ENCODE measurements at regions of chr11 and their contacts with region 1.

Region 1: DNA sequence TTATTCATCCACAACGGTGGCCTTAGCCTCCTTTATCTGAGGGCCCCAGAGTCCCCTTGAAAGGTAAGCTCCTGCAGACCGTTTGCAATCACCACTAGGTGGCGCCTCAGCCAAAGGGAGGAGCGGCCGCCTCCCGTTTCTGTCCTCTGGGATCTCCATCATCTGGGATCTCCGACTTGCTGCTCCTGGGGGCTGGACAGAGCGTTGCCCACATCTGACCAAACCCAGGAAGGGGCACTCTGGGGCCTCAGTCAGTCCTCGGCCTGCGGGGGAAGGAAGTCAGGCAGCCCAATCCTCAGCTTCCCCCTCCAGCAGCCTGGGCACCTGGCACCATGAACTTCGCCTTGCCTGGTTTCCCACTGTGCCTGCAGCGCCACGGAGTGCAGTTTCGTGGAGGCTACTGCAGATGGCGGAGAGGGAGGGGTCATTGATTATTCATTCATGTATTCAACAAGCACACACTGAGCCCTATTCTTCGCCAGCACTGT is 23.5 kb downstream of the TP53I11 start:
- DNase-seq: peak; percentile 59
- ATAC-seq: peak; percentile 61
- H3K4me3 Mint-ChIP-seq: no peak overlapping the region
- H3K27ac Mint-ChIP-seq: no peak overlapping the region
- H3K4me1 Mint-ChIP-seq: peaks cover 3% of the 10 kb centered on the region
- H3K27me3 Mint-ChIP-seq: peaks cover 2% of the 10 kb centered on the region
- CTCF ChIP-seq: peak; percentile 38

Region 2: GRCh38 chr11:45332276-45332934 is 405.2 kb after region 1 on chr11:
- CTCF ChIA-PET with region 1: interaction called, 3 read pairs
- POLR2A ChIA-PET with region 1: no interaction called
- intact Hi-C with region 1: loop called (anchors 2 kb)
- DNase-seq: no peak
- ATAC-seq: peak; percentile 81
- H3K4me3 Mint-ChIP-seq: no peak overlapping the region
- H3K27ac Mint-ChIP-seq: no peak overlapping the region
- H3K4me1 Mint-ChIP-seq: peaks cover 2% of the 10 kb centered on the region
- H3K27me3 Mint-ChIP-seq: peaks cover 26% of the 10 kb centered on the region
- CTCF ChIP-seq: no peak

Region 3: GRCh38 chr11:46222490-46223251 is 1295.5 kb after region 1 on chr11:
- CTCF ChIA-PET with region 1: no interaction called
- POLR2A ChIA-PET with region 1: interaction called, 11 read pairs
- intact Hi-C with region 1: no loop called
- DNase-seq: no peak
- ATAC-seq: no peak
- H3K4me3 Mint-ChIP-seq: no peak overlapping the region
- H3K27ac Mint-ChIP-seq: no peak overlapping the region
- H3K4me1 Mint-ChIP-seq: no peaks in the 10 kb centered on the region
- H3K27me3 Mint-ChIP-seq: peaks cover 43% of the 10 kb centered on the region
- CTCF ChIP-seq: no peak